Common myeloid progenitor, CD34-positive (primary cell): ENCODE measurements at regions of chr15 and their contacts with region 1.

Region 1: DNA sequence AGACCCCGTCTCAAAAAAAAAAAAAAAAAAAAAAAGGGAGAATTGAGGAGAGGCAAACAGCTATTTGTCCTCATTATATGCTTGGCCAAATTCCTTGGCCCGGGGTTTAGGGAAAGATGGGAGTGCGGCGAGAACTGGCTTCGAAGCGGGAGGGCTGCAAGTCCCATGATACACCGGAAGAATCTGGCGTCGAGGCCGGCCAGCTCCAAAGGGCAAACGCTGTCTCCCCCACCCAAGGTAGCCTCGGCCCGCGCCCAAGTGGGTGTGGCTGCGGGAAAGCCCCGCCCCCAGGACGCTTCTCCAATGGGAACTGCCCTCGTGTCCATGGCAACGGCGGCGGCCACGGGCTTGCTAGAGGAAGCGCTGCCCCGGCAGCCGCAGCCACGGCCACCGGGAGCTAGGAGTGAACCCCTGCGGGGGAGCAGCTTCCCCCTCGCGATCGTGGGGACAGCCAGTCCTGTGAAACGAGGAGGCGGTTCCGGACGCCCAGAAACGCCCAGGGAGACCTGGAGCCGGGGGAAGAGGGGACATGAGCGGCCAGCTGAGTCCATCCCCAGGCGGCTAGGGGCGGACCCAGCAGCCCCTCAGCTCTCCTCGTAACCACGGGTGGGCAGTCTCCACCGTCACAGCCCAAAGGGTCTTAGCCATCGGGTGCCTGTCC is at the start of gene TTLL13:
- DNase-seq: peak; percentile 80 to 91 (median 84)
- H3K4me3 ChIP-seq: peak within 1 kb of the TSS; percentile 23 to 75 (median 66)
- H3K27ac ChIP-seq: no peak within 1 kb of the TSS
- H3K4me1 ChIP-seq: peaks cover 0 to 15% (median 9%) of the 10 kb centered on the region in 4 experiments
- H3K27me3 ChIP-seq: peaks cover 0 to 2% (median 0%) of the 10 kb centered on the region in 5 experiments

Region 2: DNA sequence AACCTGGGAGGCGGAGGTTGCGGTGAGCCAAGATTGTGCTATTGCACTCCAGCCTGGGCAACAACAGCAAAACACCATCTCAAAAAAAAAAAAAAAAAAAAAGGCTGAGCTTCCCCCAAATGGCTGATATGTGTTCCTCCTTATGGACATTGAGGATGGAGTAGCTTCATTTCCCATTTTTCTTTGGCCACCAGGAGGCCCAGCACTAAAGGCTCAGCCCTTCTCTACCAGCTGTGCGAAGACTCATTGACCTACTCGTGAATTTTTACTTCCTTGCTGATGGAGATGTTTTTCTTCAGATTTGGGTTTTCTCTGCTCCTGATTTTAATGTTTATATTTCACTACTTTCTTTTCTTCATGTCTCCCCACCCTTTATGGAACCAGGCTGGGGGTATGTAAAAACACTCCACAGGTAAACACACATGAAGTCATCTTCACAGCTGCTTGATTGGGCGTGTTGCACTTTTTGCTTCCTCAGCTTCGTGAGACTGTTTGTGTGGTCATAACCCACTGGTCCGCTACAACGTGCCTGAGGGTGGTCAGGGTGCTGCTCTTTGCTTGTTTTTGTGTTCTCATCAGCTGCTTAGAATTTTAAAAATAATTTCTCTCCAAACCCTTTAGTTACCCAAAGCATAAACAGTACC is 34.7 kb before region 1 on chr15:
- CTCF ChIA-PET with region 1: no interaction called
- POLR2A ChIA-PET with region 1: no interaction called
- DNase-seq: no peak
- H3K4me3 ChIP-seq: no peak overlapping the region
- H3K27ac ChIP-seq: no peak overlapping the region
- H3K4me1 ChIP-seq: peaks cover 0 to 36% (median 27%) of the 10 kb centered on the region in 4 experiments
- H3K27me3 ChIP-seq: no peaks in the 10 kb centered on the region

Region 3: DNA sequence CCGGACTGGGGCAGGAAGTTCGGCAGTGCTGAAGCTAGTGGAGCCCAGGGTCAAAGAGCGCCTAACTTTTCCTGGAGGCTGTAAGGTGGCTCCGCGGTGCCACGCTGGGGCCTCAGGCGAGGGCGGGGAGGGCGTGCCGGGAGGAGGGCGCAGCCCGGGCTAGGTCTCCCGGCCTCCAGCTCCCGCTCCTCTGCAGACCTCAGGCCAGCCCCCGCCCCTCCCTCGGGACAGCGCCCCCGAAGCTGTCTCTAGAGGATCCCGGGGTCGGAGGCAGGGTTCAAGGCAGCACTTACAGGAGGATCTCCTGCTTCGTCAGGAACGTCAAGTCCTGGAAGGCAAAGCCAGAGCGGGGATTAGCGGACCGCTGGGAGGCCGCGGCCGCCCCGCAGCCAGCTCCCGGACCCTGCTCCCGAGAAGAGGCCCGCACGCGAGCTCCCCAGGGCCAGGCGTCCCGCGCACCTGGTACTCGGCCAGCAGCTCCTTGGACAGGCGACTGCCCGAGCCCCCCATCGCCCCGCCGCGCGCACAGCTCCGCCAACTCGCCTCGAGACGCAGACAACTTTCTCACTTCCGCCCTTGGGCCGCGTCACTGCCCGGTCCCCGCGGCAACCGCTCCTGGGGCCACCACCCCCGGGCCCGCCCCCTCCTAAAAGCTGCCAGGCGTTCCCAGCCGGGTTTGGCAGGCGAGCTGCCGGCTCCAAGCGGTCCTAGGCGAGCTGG is 15.8 kb before region 1 on chr15 and contains the start of gene CIB1:
- CTCF ChIA-PET with region 1: interaction called, 13 read pairs
- POLR2A ChIA-PET with region 1: interaction called, 4 read pairs
- DNase-seq: peak; percentile 95 to 98 (median 98)
- H3K4me3 ChIP-seq: peak within 1 kb of the TSS; percentile 76 to 88 (median 88)
- H3K27ac ChIP-seq: peak within 1 kb of the TSS; percentile 75 to 85
- H3K4me1 ChIP-seq: peaks cover 7 to 34% (median 22%) of the 10 kb centered on the region in 4 experiments
- H3K27me3 ChIP-seq: no peaks in the 10 kb centered on the region